Activated naive CD4-positive, alpha-beta T cell treated with anti-CD3 and anti-CD28 coated beads, Interleukin-2, amount 10 ng/mL, durations not matched to agents 7 days and 5 days (primary cell): ENCODE measurements at regions of chr11 and their contacts with region 1.

Region 1: DNA sequence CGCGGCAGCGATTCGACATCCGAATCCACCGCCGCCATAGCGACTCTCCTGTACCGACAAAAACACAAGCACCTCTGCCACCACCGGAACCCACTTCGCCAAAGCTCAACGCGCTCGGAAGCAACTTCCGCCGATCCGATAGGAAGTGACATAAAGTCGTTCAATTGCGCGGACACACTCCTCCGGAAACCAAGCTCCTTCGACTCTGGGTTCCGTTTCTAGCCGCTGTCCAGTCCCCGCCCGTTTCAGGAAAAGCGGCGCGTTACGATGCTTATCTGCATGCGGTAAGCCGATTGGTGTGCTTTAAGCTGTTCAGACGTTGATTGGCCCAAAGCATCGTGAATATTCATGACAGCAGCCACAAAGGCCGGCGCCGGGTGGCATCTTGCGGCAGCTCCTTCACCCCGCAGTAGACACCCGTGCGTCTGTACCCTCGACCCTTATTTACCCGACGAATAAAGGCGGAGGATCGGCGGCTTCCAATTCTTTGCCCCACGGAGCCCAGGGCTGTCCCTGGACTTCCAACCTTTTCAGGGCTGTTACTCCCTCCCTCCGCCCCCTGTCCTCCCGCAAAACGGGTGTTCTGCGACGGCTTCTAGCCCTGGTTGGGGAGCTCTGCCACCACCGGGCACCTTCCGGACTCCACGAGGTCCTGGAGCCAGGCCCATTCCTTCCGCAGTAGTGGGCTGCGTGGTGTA is at the start of gene TUT1:
- DNase-seq: peak; percentile 98
- H3K4me3 Mint-ChIP-seq: peak within 1 kb of the TSS; percentile 100
- H3K27ac Mint-ChIP-seq: peak within 1 kb of the TSS; percentile 98
- H3K4me1 Mint-ChIP-seq: peaks cover 56% of the 10 kb centered on the region
- H3K27me3 Mint-ChIP-seq: no peaks in the 10 kb centered on the region

Region 2: DNA sequence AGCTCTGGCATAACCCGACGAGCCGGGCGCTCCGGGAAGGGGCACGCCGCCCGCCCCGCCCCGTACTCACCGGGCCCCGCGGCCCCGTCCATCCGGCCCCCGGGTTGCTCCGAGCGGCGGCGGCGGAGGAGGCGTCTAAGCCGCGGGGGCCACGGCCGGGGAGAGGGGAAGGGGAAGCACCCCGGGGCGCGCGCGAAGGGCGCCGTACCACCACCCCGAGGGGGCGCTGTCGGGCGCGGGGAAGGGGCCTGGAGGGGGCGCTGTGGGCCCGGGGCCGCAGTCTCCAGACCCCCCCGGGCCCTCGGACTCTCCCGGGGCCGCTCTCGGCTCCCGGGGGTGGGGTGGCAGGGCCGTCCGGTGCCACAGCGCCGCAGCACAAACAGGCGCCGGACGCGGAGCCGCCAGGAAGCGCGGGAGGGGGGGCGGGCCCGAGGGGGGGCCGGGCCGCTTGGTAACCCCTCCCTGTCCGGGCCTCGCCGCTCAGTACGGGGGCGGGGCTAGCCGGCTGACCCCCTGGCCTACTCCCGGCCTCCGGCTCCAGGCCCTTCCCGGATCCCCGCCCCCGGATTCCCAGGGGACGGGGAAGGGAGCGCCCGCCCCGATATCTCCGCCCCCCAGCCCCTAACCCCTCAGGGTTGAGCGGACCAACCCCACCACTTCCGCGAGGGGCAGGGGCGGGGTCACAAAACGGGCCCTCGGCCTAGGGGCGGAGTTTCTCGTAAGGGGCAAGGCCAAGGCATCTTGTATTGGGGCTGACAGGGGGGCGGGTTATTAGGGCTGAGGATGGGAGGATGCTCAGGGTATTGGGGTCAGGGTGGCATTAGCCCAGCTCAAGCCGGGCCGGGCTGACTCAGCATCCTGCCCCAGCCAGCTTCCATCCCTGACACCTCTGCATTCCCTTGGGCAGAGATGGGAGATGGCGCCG is 21.0 kb after region 1 on chr11 and contains the starts of genes EML3 and ROM1:
- CTCF ChIA-PET with region 1: interaction called, 44 read pairs
- DNase-seq: peak; percentile 93
- H3K4me3 Mint-ChIP-seq: peak within 1 kb of the TSS; percentile 91
- H3K27ac Mint-ChIP-seq: peak within 1 kb of the TSS; percentile 95
- H3K4me1 Mint-ChIP-seq: peaks cover 67% of the 10 kb centered on the region
- H3K27me3 Mint-ChIP-seq: no peaks in the 10 kb centered on the region